BJ (cell line): ENCODE measurements at regions of chr19 and their contacts with region 1.

Region 1: DNA sequence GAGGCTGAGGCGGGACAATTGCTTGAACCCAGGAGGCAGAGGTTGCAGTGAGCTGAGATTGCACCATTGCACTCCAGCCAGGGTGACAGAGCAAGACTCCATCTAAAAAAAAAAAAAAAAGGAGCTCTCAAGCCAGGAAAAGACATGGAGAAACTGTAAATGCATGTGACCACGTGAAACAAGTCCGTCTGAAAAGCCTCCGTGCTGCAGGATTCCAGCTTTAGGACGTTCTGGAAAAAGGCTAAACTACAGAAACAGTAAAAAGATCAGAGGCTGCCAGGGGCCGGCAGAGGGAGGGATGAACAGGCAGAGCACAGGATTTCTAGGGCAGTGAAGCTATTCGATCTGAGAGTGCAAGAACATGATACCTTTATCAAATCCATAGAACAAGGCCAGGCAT is 40.7 kb upstream of the NDUFS7 start:
- DNase-seq: no peak
- H3K4me3 ChIP-seq: no peak overlapping the region
- H3K27me3 ChIP-seq: peaks cover 2% of the 10 kb centered on the region; the same call in 1 of the 2 replicates
- CTCF ChIP-seq: 0 out of 2 replicates have a peak, but pooled peaks have one; percentile 7

Region 2: GRCh38 chr19:1304197-1304924 is 38.7 kb before region 1 on chr19:
- CTCF ChIA-PET with region 1: no interaction called
- POLR2A ChIA-PET with region 1: no interaction called
- DNase-seq: no peak
- H3K4me3 ChIP-seq: no peak overlapping the region
- H3K27me3 ChIP-seq: no peaks in the 10 kb centered on the region
- CTCF ChIP-seq: no peak

Region 3: DNA sequence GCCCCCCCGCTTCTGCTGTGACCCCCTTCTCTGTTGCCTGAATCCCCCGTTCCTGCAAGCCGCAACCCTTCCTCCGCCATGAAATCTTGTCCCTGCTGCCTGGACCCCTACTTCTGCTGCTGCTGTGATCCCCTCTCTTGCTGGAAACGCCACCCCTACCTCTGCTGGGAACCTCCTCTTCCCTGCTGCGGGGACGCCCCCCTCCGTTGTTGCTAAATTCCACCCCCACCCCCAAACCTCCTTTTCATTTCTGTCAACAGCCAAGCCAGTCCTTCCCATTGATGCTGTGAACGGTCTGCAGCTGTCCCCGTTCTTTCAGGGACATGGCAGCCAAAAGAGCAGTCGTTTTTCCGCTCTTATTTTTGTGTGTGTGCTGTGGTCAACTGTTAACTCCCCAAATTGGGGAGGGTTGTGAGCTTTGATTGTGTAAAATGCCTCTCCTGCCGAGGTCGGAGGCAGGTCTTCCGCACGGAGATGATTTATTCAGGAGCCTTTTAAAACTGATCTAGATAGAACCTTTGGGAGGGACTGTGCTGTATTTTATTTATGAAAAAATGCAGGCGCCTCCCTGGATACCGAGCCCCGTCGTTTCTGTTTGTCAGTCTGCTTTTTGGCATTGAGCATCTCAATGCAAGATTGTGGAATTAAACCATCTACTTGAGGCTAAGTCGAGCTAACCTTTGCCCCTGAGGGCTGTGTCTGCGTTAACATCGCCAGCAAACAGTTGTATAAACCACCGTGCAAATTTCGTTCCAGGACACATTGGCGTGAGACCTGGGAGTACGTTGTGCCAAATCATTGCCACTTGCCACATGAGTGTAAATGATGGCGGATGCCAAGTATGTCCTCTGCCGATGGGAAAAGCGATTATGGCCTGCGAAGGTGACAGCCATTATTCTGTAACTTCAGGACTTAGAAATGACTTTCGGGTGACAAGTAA is 12.8 kb after region 1 on chr19:
- CTCF ChIA-PET with region 1: interaction called, 6 read pairs
- POLR2A ChIA-PET with region 1: interaction called, 14 read pairs
- DNase-seq: no peak
- H3K4me3 ChIP-seq: peak overlapping the region; percentile 74
- H3K27me3 ChIP-seq: no peaks in the 10 kb centered on the region
- CTCF ChIP-seq: no peak